PC-9 (cell line): ENCODE measurements at regions of chr2 and their contacts with region 1.

Region 1: GRCh38 chr2:35245508-35245907 is 1110.1 kb upstream of the CRIM1 start:
- DNase-seq: no peak
- H3K4me3 ChIP-seq: no peak overlapping the region
- H3K27ac ChIP-seq: no peak overlapping the region
- H3K4me1 ChIP-seq: no peaks in the 10 kb centered on the region
- H3K27me3 ChIP-seq: no peaks in the 10 kb centered on the region
- CTCF ChIP-seq: no peak

Region 2: DNA sequence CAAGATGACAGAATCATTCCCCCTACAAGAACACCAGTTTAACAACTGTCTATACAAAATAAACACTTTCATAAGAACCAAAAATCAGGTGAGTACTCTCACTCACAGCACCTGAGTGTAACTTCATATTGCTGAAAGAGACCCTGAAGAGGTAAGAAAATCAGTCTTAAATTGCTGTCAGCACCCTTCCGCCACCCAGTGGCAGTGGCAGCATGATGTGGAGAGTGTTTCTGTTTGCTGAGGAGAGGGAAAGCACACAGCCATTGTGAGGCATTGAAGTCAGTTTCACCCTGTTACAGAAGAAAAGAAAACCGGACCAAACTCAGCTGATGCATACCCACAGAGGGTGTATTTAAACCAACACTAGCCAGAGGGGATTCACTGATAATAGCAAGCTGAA is 130.7 kb before region 1 on chr2:
- CTCF ChIA-PET with region 1: no interaction called
- POLR2A ChIA-PET with region 1: no interaction called
- intact Hi-C with region 1: no loop called
- DNase-seq: no peak
- H3K4me3 ChIP-seq: no peak overlapping the region
- H3K27ac ChIP-seq: no peak overlapping the region
- H3K4me1 ChIP-seq: no peaks in the 10 kb centered on the region
- H3K27me3 ChIP-seq: no peaks in the 10 kb centered on the region
- CTCF ChIP-seq: peak; percentile 33; the same call in 1 of the 2 replicates

Region 3: DNA sequence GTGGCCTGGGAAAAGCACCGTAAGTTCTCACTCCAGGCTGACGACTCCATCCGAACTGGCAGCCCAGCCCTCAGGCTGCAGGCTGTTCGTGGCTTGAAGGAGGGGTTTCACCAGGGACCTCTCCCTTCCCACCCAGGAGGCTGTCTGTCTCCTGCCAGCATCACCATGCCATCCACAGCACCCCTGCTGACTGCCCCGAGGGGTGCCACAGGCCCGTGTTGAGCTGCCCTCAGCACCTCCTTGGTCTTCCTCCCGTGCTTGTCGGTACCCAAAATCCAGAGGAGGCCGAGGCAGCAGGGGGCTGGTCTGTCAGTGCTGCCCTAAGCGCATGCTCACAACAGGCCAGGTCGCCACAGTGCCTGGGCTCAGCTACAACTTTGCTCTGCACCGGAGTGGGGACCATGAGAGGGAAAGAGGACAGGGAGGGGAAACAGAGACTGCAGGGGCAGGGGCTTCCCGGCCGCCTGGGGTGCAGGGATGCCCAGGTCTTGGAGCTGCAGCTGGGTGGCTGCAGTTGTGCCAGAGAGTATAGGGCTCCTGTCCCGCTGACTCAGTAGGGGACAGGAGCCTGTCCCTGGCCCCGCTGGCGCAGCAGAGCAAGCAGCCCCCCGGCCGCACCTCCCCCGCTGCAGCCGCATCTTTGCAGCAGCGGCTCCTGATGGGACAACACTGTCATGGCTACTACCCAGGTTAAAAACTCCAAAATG is 146.4 kb after region 1 on chr2:
- CTCF ChIA-PET with region 1: interaction called, 19 read pairs
- POLR2A ChIA-PET with region 1: no interaction called
- intact Hi-C with region 1: no loop called
- DNase-seq: no peak
- H3K4me3 ChIP-seq: no peak overlapping the region
- H3K27ac ChIP-seq: no peak overlapping the region
- H3K4me1 ChIP-seq: no peaks in the 10 kb centered on the region
- H3K27me3 ChIP-seq: peaks cover 7% of the 10 kb centered on the region; the same call in 1 of the 2 replicates
- CTCF ChIP-seq: no peak